ENCODE measurements at regions of chr19 and their contacts with region 1.

Region 1: DNA sequence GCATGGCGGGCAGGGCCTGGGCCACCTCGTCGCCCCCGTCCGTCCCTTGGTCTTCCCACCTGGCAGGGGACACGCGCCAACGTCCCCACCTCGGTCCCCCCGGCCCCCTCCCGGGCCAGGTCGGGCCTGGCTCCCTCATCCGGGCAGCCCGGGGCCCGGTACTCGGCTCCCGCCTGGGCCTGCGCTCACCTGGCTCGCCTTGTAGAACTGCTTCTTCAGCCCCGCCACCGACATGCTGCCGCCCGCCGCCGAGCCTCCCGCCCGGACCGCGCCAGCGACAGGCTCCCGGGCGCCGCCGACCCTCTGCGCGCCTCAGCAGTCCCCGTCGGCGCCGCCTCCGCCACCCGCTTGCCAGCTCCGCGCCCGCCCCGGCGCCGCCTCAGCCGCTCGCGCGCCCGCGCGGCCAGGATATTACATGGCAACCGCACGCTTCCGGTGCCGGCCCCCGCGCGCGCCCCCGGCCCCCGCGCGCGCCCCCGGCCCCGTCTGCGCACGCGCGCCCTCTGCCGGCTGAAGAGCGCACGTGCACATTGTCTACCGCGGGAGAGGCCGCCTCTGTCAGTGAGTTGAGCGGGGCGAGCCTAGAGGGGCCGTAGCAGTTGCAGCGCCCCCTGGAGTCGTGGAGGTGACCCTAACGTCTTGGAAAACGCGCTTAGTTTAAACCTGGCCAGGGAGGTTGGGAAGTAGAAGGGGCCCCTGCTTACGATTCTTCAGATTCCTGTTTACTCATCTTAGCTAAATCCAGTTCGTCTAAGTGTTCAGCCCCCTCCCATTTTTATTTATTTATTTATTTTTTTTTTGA is at the start of gene SH3GL1:
- DNase-seq: peak; percentile 87 to 98 (median 92)
- ATAC-seq: peak; percentile 87
- H3K4me3 ChIP-seq: peak within 1 kb of the TSS; percentile 87
- H3K4me3 Mint-ChIP-seq: peak within 1 kb of the TSS; percentile 80 to 99 (median 92)
- H3K27ac ChIP-seq: peak within 1 kb of the TSS; percentile 97
- H3K27ac Mint-ChIP-seq: peak within 1 kb of the TSS; percentile 87 to 100 (median 99)
- H3K4me1 ChIP-seq: peaks cover 31 to 38% of the 10 kb centered on the region in 2 donors
- H3K4me1 Mint-ChIP-seq: peaks cover 23 to 75% (median 60%) of the 10 kb centered on the region in 7 donors
- H3K27me3 ChIP-seq: no peaks in the 10 kb centered on the region
- H3K27me3 Mint-ChIP-seq: no peaks in the 10 kb centered on the region
- total RNA-seq, gene SH3GL1: 37.1 to 77.0 (median 38.6) TPM

Region 2: DNA sequence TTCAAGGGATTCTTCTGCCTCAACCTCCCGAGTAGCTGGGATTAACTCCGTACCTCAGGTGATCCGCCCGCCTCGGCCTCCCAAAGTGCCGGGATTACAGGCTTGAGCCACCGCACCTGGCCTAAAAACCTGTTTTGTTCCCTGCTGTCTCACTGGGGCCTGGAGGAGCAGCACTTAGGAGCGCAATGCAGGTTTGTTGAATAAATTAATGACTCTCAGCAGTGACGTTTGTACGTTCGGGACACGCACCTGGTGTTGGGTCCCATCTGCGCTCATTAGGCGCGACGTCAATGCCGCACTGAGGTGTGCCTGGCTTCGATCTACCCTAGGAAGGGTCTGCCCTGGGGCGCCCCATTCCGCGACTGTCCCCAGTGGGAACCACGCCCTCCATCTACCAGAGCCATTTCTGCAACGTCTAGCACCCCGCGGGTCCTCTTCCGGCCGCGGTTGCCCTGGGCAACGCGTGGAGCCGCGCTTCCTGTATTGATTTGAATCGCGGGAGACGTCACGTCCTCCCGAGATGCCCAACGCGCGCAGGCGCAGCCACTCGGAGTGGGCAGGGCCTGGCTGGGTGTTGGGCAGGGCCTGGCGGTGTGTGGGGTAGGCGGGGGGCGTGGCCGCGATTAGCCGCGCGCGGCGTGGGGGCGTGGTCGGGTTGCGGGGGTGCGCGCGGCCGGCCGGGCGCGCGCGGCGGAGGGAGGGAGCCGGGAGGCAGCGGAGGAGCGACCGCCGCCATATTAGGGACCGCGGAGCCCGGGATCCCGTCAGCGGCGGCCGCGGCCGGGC is 894.5 kb before region 1 on chr19 and contains the start of gene FZR1:
- CTCF ChIA-PET with region 1: no interaction called
- POLR2A ChIA-PET with region 1: no interaction called
- intact Hi-C with region 1: loop called (anchors 2 kb)
- DNase-seq: peak; percentile 98 to 100 (median 100)
- ATAC-seq: peak; percentile 96
- H3K4me3 ChIP-seq: peak within 1 kb of the TSS; percentile 97
- H3K4me3 Mint-ChIP-seq: peak within 1 kb of the TSS; percentile 88 to 98 (median 92)
- H3K27ac ChIP-seq: peak within 1 kb of the TSS; percentile 95
- H3K27ac Mint-ChIP-seq: peak within 1 kb of the TSS; percentile 91 to 98 (median 96)
- H3K4me1 ChIP-seq: peaks cover 14 to 23% of the 10 kb centered on the region in 2 donors
- H3K4me1 Mint-ChIP-seq: peaks cover 29 to 57% (median 44%) of the 10 kb centered on the region in 7 donors
- H3K27me3 ChIP-seq: no peaks in the 10 kb centered on the region
- H3K27me3 Mint-ChIP-seq: peaks cover 0 to 3% (median 0%) of the 10 kb centered on the region in 5 donors
- total RNA-seq, gene FZR1: 60.7 to 90.7 (median 71.3) TPM

Region 3: DNA sequence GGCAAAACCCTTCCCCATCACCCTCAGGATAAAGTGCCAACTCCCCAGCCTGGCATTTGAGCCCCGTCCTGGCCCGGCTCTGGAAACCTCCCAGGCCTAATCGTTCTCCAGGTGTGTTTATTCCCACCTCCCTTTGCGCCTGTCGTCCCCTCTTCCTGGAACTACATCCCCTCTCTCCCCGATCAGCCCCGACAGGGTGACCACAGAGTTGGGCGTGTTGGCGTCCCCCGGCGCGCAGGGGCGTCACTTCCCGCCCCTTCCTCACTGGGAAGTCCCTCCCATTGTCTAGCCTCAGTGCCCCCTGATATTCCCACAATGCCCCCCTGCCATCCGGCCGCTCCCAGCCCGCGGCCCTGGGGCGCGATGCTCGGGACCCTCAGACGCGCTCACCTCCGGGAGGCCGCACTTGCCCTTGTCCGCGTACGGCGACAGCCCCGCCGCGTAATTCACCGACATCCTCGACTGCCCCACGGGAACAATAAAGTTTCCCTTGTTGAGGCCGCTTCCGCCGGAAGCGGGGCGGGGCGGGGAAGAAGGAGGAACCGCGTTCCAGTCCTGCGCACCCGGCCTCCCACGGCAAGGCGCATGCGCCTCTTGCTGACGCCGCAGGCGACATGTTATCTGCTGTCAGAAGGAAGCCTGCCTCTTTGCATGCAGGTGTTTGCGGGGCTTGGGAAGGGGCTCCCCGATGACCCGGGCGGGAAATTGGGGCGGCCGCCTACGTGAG is 218.1 kb before region 1 on chr19 and contains the starts of genes ANKRD24 and SIRT6:
- CTCF ChIA-PET with region 1: no interaction called
- POLR2A ChIA-PET with region 1: no interaction called
- intact Hi-C with region 1: loop called (anchors 1 kb)
- DNase-seq: peak; percentile 91 to 97 (median 96)
- ATAC-seq: peak; percentile 90
- H3K4me3 ChIP-seq: peak within 1 kb of the TSS; percentile 90
- H3K4me3 Mint-ChIP-seq: peak within 1 kb of the TSS; percentile 92 to 99 (median 96)
- H3K27ac ChIP-seq: peak within 1 kb of the TSS; percentile 86
- H3K27ac Mint-ChIP-seq: peak within 1 kb of the TSS; percentile 92 to 98 (median 95)
- H3K4me1 ChIP-seq: peaks cover 14 to 15% of the 10 kb centered on the region in 2 donors
- H3K4me1 Mint-ChIP-seq: peaks cover 25 to 44% (median 39%) of the 10 kb centered on the region in 7 donors
- H3K27me3 ChIP-seq: no peaks in the 10 kb centered on the region
- H3K27me3 Mint-ChIP-seq: peaks cover 0 to 2% (median 0%) of the 10 kb centered on the region in 5 donors
- total RNA-seq, gene ANKRD24: 0.75 to 2.8 (median 2.4) TPM
- total RNA-seq, gene SIRT6: 20.0 to 41.2 (median 26.0) TPM

Region 4: GRCh38 chr19:4328243-4328990 is 71.9 kb before region 1 on chr19:
- CTCF ChIA-PET with region 1: no interaction called
- POLR2A ChIA-PET with region 1: no interaction called
- intact Hi-C with region 1: loop called in 1 of 2 experiments (anchors 1 kb)
- DNase-seq: peak; percentile 87 to 96 (median 93)
- ATAC-seq: peak; percentile 93
- H3K4me3 ChIP-seq: peak overlapping the region; percentile 65
- H3K4me3 Mint-ChIP-seq: peak overlapping the region; percentile 83 to 90 (median 87)
- H3K27ac ChIP-seq: peak overlapping the region; percentile 52
- H3K27ac Mint-ChIP-seq: peak overlapping the region; percentile 72 to 98 (median 91)
- H3K4me1 ChIP-seq: peaks cover 11 to 14% of the 10 kb centered on the region in 2 donors
- H3K4me1 Mint-ChIP-seq: peaks cover 8 to 28% (median 24%) of the 10 kb centered on the region in 7 donors
- H3K27me3 ChIP-seq: no peaks in the 10 kb centered on the region
- H3K27me3 Mint-ChIP-seq: peaks cover 0 to 4% (median 0%) of the 10 kb centered on the region in 5 donors

Region 5: GRCh38 chr19:4445963-4446703 is 45.8 kb after region 1 on chr19:
- CTCF ChIA-PET with region 1: no interaction called
- POLR2A ChIA-PET with region 1: no interaction called
- intact Hi-C with region 1: no loop called
- DNase-seq: no peak
- ATAC-seq: no peak
- H3K4me3 ChIP-seq: no peak overlapping the region
- H3K4me3 Mint-ChIP-seq: no peak overlapping the region
- H3K27ac ChIP-seq: no peak overlapping the region
- H3K27ac Mint-ChIP-seq: no peak overlapping the region
- H3K4me1 ChIP-seq: no peaks in the 10 kb centered on the region
- H3K4me1 Mint-ChIP-seq: peaks cover 0 to 5% (median 0%) of the 10 kb centered on the region in 7 donors
- H3K27me3 ChIP-seq: no peaks in the 10 kb centered on the region
- H3K27me3 Mint-ChIP-seq: no peaks in the 10 kb centered on the region

Region 6: GRCh38 chr19:4457654-4458395 is 57.5 kb after region 1 on chr19 and contains the start of gene UBXN6:
- CTCF ChIA-PET with region 1: interaction called, 3 read pairs
- POLR2A ChIA-PET with region 1: interaction called, 4 read pairs
- intact Hi-C with region 1: loop called (anchors 1 kb)
- DNase-seq: peak; percentile 92 to 99 (median 96)
- ATAC-seq: peak; percentile 99
- H3K4me3 ChIP-seq: peak within 1 kb of the TSS; percentile 64
- H3K4me3 Mint-ChIP-seq: peak within 1 kb of the TSS; percentile 83 to 98 (median 89)
- H3K27ac ChIP-seq: peak within 1 kb of the TSS; percentile 83
- H3K27ac Mint-ChIP-seq: peak within 1 kb of the TSS; percentile 89 to 97 (median 93)
- H3K4me1 ChIP-seq: peaks cover 10% of the 10 kb centered on the region in 2 donors
- H3K4me1 Mint-ChIP-seq: peaks cover 9 to 25% (median 16%) of the 10 kb centered on the region in 7 donors
- H3K27me3 ChIP-seq: no peaks in the 10 kb centered on the region
- H3K27me3 Mint-ChIP-seq: no peaks in the 10 kb centered on the region
- total RNA-seq, gene UBXN6: 49.2 to 68.6 (median 53.1) TPM

Region 7: GRCh38 chr19:4669723-4670480 is 269.6 kb after region 1 on chr19 and contains the start of gene MYDGF:
- CTCF ChIA-PET with region 1: no interaction called
- POLR2A ChIA-PET with region 1: no interaction called
- intact Hi-C with region 1: loop called in 1 of 2 experiments (anchors 1 kb)
- DNase-seq: peak; percentile 86 to 95 (median 92)
- ATAC-seq: peak; percentile 100
- H3K4me3 ChIP-seq: peak within 1 kb of the TSS; percentile 65
- H3K4me3 Mint-ChIP-seq: peak within 1 kb of the TSS; percentile 77 to 92 (median 86)
- H3K27ac ChIP-seq: peak within 1 kb of the TSS; percentile 81
- H3K27ac Mint-ChIP-seq: peak within 1 kb of the TSS; percentile 28 to 95 (median 84)
- H3K4me1 ChIP-seq: peaks cover 10 to 13% of the 10 kb centered on the region in 2 donors
- H3K4me1 Mint-ChIP-seq: peaks cover 0 to 20% (median 16%) of the 10 kb centered on the region in 7 donors
- H3K27me3 ChIP-seq: no peaks in the 10 kb centered on the region
- H3K27me3 Mint-ChIP-seq: no peaks in the 10 kb centered on the region
- total RNA-seq, gene MYDGF: 28.1 to 81.0 (median 32.1) TPM

Region 8: DNA sequence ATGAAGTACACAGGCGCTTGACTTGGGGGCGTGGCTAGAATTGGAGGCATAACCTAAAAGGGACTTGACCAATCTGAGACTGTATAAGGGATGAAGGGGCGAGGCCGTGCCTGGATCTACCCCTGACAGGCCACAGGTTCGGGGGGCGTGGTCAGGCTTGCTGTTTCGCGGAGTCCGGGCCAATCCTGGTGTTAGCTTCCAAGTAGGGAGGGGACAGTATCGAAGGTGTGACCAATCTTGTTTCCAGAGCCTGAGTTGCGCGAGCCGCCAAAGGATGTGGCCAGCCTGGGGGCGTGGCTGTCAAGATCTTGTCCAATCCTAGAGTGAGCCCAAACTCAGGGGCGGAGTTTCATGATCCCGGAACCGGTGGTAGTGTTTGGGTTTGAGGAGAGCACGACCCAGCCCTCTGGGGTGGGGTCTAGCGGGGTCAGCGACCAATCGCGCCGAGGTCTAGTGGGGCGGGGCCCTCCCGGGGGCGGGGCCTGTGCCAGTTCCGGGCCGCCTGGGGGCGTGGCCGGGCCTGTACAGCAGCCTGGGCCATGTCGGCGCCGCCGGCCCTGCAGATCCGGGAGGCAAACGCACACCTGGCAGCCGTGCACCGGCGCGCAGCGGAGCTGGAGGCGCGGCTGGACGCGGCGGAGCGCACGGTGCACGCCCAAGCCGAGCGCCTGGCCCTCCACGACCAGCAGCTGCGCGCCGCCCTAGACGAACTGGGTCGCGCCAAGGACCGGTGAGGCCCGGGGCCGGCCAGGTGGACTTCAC is 1504.2 kb after region 1 on chr19 and contains the start of gene VMAC:
- CTCF ChIA-PET with region 1: no interaction called
- POLR2A ChIA-PET with region 1: no interaction called
- intact Hi-C with region 1: loop called in 1 of 2 experiments (anchors 5 kb)
- DNase-seq: peak in 8 of 9 donors; percentile 99 to 100 (median 100)
- ATAC-seq: peak; percentile 85
- H3K4me3 ChIP-seq: peak within 1 kb of the TSS; percentile 89
- H3K4me3 Mint-ChIP-seq: peak within 1 kb of the TSS; percentile 89 to 99 (median 96)
- H3K27ac ChIP-seq: peak within 1 kb of the TSS; percentile 93
- H3K27ac Mint-ChIP-seq: peak within 1 kb of the TSS; percentile 96 to 100 (median 100)
- H3K4me1 ChIP-seq: peaks cover 18 to 19% of the 10 kb centered on the region in 2 donors
- H3K4me1 Mint-ChIP-seq: peaks cover 21 to 53% (median 30%) of the 10 kb centered on the region in 7 donors
- H3K27me3 ChIP-seq: no peaks in the 10 kb centered on the region
- H3K27me3 Mint-ChIP-seq: no peaks in the 10 kb centered on the region
- total RNA-seq, gene VMAC: 13.1 to 39.4 (median 27.8) TPM